IMR-90 (cell line): ENCODE measurements at regions of chr3 and their contacts with region 1.

Region 1: DNA sequence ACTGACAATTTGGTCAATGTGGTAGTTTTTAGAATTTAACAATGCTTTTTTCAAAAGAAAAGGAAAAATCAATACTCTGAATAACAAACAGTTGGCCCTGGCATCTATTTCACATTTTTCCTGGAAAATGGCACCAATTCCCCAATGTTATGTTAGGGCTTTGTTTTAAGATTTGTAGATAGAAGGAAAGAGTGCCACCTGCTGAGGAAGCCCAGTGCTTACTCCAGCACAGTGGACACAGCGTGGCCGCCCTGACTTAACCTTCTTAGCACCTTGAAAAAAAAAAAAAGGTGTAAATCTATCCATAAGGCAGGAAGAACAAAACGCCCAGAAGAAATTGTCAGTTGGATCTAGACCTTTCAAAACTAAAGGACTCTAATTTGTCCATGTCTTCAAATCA is 110.7 kb upstream of the CNTN4 start:
- DNase-seq: no peak
- ATAC-seq: no peak
- H3K4me3 ChIP-seq: no peak overlapping the region
- H3K27ac ChIP-seq: no peak overlapping the region
- H3K4me1 ChIP-seq: no peaks in the 10 kb centered on the region
- H3K27me3 ChIP-seq: no peaks in the 10 kb centered on the region
- CTCF ChIP-seq: no peak
- POLR2A ChIP-seq: no peak
- RAD21 ChIP-seq: no peak

Region 2: GRCh38 chr3:1766384-1766783 is 221.6 kb before region 1 on chr3:
- CTCF ChIA-PET with region 1: no interaction called
- POLR2A ChIA-PET with region 1: no interaction called
- dilution Hi-C with region 1: no loop called
- in situ Hi-C with region 1: no loop called
- intact Hi-C with region 1: no loop called
- DNase-seq: no peak
- ATAC-seq: no peak
- H3K4me3 ChIP-seq: no peak overlapping the region
- H3K27ac ChIP-seq: no peak overlapping the region
- H3K4me1 ChIP-seq: no peaks in the 10 kb centered on the region
- H3K27me3 ChIP-seq: no peaks in the 10 kb centered on the region
- CTCF ChIP-seq: no peak
- POLR2A ChIP-seq: no peak
- RAD21 ChIP-seq: no peak

Region 3: GRCh38 chr3:3179407-3180094 is 1191.6 kb after region 1 on chr3 and contains the start of gene CRBN:
- CTCF ChIA-PET with region 1: no interaction called
- POLR2A ChIA-PET with region 1: no interaction called
- dilution Hi-C with region 1: no loop called
- in situ Hi-C with region 1: no loop called
- intact Hi-C with region 1: loop called (anchors 10 kb)
- DNase-seq: peak; percentile 76
- ATAC-seq: peak; percentile 100
- H3K4me3 ChIP-seq: peak within 1 kb of the TSS; percentile 64
- H3K27ac ChIP-seq: peak within 1 kb of the TSS; percentile 12
- H3K4me1 ChIP-seq: no peaks in the 10 kb centered on the region
- H3K27me3 ChIP-seq: no peaks in the 10 kb centered on the region
- CTCF ChIP-seq: peak; percentile 97
- POLR2A ChIP-seq: peak; percentile 73
- RAD21 ChIP-seq: peak; percentile 51
- total RNA-seq, gene CRBN: 33.9 and 53.9 TPM in 2 replicates